Naive thymus-derived CD4-positive, alpha-beta T cell (primary cell): ENCODE measurements at regions of chrX and their contacts with region 1.

Region 1: DNA sequence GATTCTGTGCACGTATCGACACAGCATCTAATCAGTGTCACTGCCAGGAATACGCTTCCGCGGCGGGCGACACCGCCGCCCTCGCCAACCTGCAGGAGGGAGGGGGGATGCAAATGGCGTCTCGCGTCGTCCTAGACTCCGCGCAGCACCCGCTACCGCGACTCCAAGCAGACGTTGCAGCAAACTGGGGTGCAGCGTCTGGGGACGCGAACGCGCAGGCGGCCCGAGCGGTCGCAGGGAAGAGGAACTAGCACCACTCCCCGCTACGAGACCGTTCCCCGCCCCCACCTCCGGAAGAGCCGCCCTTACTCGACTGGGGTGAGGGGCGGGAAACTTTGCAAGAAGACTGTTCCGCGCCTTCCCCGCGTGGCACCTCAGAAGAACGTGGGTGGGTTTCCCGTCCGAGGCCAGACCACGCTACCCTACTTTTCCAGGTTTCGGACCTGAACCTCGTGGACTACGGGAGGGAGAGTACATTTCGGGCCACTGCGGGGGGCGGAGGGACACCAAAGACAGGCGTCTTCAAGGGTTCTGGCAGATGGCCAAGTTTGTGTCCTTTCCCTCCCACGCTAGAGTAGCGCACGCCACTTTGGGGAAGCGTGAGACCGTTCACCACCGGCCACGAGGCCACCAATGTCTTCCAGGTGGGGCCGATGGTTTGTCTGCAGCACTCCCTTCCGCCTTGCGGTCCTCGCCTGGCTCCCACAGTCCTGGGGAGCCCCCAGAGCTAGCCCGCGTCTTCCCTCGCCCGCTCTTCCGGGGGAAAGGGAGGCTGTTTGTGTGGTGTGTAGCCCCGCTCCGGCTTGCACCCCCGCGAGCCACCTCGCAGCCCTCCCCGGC is 78.0 kb upstream of the BCOR start:
- DNase-seq: peak; percentile 60 to 91 (median 83)
- ATAC-seq: peak; percentile 58
- H3K4me3 ChIP-seq: peak overlapping the region; percentile 73
- H3K4me3 Mint-ChIP-seq: peak overlapping the region; percentile 89 to 93 (median 90)
- H3K27ac ChIP-seq: peak overlapping the region; percentile 98
- H3K27ac Mint-ChIP-seq: peak overlapping the region; percentile 96 to 100 (median 98)
- H3K4me1 ChIP-seq: peaks cover 13 to 18% of the 10 kb centered on the region in 2 donors
- H3K4me1 Mint-ChIP-seq: peaks cover 5 to 46% (median 36%) of the 10 kb centered on the region in 7 donors
- H3K27me3 ChIP-seq: no peaks in the 10 kb centered on the region
- H3K27me3 Mint-ChIP-seq: no peaks in the 10 kb centered on the region

Region 2: DNA sequence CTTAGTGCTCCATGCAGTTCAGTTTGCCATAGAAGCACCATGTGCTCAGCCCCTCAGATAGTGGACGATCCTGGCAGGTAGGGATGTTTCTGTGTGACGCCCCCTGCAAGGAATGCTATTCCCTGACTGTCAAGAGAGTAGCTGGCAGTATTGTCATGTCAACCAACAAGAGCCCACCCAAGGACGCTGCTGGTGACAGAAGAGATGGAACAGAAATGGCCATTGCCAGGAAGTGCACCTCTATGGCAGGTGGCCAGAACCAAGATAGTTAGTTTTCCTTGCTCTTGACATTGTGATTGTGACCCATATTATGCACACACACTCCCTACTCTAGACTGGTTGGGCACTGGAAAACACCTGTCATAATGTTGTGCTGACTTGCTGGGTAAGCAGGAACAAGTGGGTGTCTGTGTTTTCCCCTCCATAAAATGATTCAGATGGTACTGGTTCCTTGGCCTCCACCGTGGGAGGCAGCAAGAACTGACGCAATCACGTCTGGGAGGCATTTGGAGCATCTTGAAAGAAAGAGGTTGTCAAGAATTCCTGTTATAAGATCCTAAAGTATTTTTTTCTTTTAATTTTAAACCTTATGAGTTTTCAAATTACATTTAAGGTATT is 866.6 kb before region 1 on chrX:
- CTCF ChIA-PET with region 1: no interaction called
- POLR2A ChIA-PET with region 1: no interaction called
- intact Hi-C with region 1: loop called in 1 of 2 experiments (anchors 5 kb)
- DNase-seq: peak in 7 of 9 donors; percentile 23 to 81 (median 43)
- ATAC-seq: peak; percentile 83
- H3K4me3 ChIP-seq: peak overlapping the region; percentile 41
- H3K4me3 Mint-ChIP-seq: peak overlapping the region; percentile 33 to 91 (median 76)
- H3K27ac ChIP-seq: peak overlapping the region; percentile 84
- H3K27ac Mint-ChIP-seq: peak overlapping the region; percentile 95 to 100 (median 99)
- H3K4me1 ChIP-seq: peaks cover 18 to 42% of the 10 kb centered on the region in 2 donors
- H3K4me1 Mint-ChIP-seq: peaks cover 28 to 81% (median 74%) of the 10 kb centered on the region in 7 donors
- H3K27me3 ChIP-seq: no peaks in the 10 kb centered on the region
- H3K27me3 Mint-ChIP-seq: no peaks in the 10 kb centered on the region

Region 3: DNA sequence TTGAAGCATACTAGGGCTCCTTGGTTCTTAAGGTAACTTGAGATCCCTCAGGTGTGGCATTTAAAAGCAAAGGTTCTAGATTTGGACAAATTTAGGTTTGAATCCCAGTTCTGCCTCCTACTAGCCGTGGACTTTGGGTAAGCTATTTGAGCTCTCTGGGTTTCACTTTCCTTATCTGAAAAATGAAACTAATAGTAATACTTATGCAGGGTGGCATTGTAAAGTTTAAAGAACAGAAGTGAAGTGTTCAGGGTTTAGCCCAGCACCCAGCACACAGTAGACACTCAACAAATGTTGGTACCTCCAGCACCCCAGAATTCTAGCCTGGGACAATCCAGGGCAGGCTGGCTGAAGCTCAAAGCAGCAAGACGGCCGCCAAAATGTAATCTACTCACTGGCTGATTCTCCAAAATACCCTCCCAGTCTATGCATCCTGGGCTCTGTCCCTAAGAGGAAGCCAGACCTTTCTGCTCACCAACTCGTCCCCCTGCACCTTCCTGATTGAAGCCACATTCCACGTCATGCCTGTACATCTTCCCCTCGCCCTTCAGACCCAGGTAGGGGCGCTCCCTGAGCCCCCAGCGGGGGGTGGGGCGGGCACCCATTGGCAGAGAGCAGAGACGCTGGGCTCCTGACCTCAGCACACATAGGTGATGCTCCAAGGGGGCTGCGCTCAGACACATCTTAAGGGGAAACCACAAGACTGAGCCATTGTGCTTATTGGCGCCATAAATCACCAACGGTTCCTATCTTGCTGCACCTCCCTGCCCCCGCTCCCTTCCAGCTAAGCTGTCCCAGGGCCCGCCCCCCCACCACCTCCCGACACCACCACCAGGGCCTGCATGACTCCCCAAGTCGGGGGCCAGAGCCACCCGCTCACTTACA is 238.6 kb before region 1 on chrX:
- CTCF ChIA-PET with region 1: no interaction called
- POLR2A ChIA-PET with region 1: no interaction called
- intact Hi-C with region 1: no loop called
- DNase-seq: peak in 3 of 9 donors; percentile 2 to 14 (median 8)
- ATAC-seq: peak; percentile 58
- H3K4me3 ChIP-seq: peak overlapping the region; percentile 50
- H3K4me3 Mint-ChIP-seq: peak overlapping the region; percentile 74 to 84 (median 77)
- H3K27ac ChIP-seq: peak overlapping the region; percentile 55
- H3K27ac Mint-ChIP-seq: peak overlapping the region; percentile 22 to 89 (median 81)
- H3K4me1 ChIP-seq: peaks cover 0 to 6% of the 10 kb centered on the region in 2 donors
- H3K4me1 Mint-ChIP-seq: peaks cover 0 to 16% (median 10%) of the 10 kb centered on the region in 7 donors
- H3K27me3 ChIP-seq: no peaks in the 10 kb centered on the region
- H3K27me3 Mint-ChIP-seq: no peaks in the 10 kb centered on the region

Region 4: DNA sequence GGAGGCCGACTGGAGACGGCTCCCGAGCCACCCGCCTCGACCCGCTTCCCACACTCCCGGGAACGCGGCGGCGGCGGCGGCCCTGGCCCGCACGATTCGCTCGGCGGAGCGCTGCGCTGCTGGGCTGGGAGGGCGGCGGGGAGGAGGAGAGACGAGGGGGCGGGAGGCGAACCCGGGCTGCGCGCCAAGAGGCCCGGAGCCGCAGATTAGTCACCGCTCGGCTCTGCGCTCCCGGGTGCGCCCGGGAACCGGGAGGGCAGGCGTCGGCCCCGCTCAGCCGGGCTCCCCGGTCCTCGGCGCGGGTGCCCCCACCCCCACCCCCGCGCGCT is 66.8 kb before region 1 on chrX:
- CTCF ChIA-PET with region 1: no interaction called
- POLR2A ChIA-PET with region 1: interaction called, 32 read pairs
- intact Hi-C with region 1: no loop called
- DNase-seq: peak in 5 of 9 donors; percentile 44 to 64 (median 51)
- ATAC-seq: peak; percentile 59
- H3K4me3 ChIP-seq: peak overlapping the region; percentile 43
- H3K4me3 Mint-ChIP-seq: peak overlapping the region in 9 of 10 donors; percentile 54 to 87 (median 73)
- H3K27ac ChIP-seq: peak overlapping the region; percentile 23
- H3K27ac Mint-ChIP-seq: no peak overlapping the region
- H3K4me1 ChIP-seq: no peaks in the 10 kb centered on the region
- H3K4me1 Mint-ChIP-seq: peaks cover 0 to 28% (median 13%) of the 10 kb centered on the region in 7 donors
- H3K27me3 ChIP-seq: no peaks in the 10 kb centered on the region
- H3K27me3 Mint-ChIP-seq: peaks cover 0 to 7% (median 0%) of the 10 kb centered on the region in 5 donors

Region 5: GRCh38 chrX:40201329-40201885 is 25.7 kb after region 1 on chrX:
- CTCF ChIA-PET with region 1: no interaction called
- POLR2A ChIA-PET with region 1: interaction called, 8 read pairs
- intact Hi-C with region 1: loop called (anchors 1 to 5 kb)
- DNase-seq: peak in 2 of 9 donors; percentile 13 to 15
- ATAC-seq: peak; percentile 80
- H3K4me3 ChIP-seq: no peak overlapping the region
- H3K4me3 Mint-ChIP-seq: peak overlapping the region in 1 of 10 donors; percentile 67
- H3K27ac ChIP-seq: no peak overlapping the region
- H3K27ac Mint-ChIP-seq: peak overlapping the region in 2 of 9 donors; percentile 25 to 90
- H3K4me1 ChIP-seq: peaks cover 2 to 5% of the 10 kb centered on the region in 2 donors
- H3K4me1 Mint-ChIP-seq: peaks cover 0 to 22% (median 13%) of the 10 kb centered on the region in 7 donors
- H3K27me3 ChIP-seq: no peaks in the 10 kb centered on the region
- H3K27me3 Mint-ChIP-seq: no peaks in the 10 kb centered on the region

Region 6: GRCh38 chrX:40213092-40213491 is 37.4 kb after region 1 on chrX:
- CTCF ChIA-PET with region 1: no interaction called
- POLR2A ChIA-PET with region 1: interaction called, 14 read pairs
- intact Hi-C with region 1: loop called (anchors 2 to 5 kb)
- DNase-seq: no peak
- ATAC-seq: no peak
- H3K4me3 ChIP-seq: no peak overlapping the region
- H3K4me3 Mint-ChIP-seq: no peak overlapping the region
- H3K27ac ChIP-seq: no peak overlapping the region
- H3K27ac Mint-ChIP-seq: no peak overlapping the region
- H3K4me1 ChIP-seq: no peaks in the 10 kb centered on the region
- H3K4me1 Mint-ChIP-seq: peaks cover 0 to 5% (median 0%) of the 10 kb centered on the region in 7 donors
- H3K27me3 ChIP-seq: no peaks in the 10 kb centered on the region
- H3K27me3 Mint-ChIP-seq: no peaks in the 10 kb centered on the region

Region 7: DNA sequence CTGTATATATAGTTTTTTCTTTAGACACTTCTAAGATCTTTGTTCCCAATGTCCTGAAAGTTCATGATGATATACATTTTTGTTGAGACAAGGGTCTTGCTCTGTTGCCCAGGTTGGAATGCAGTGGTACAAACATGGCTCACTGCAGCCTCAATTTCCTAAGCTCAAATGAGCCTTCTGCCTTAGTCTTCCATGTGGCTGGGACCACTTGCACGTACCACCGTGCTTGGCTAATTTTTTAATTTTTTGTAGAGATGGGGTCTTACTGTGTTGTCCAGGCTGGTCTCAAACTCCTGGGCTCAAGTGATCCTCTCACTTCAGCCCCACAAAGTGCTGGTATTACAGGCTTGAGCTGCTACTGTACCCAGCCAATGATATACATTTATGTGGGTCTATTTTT is 54.9 kb after region 1 on chrX:
- CTCF ChIA-PET with region 1: no interaction called
- POLR2A ChIA-PET with region 1: no interaction called
- intact Hi-C with region 1: no loop called
- DNase-seq: no peak
- ATAC-seq: no peak
- H3K4me3 ChIP-seq: no peak overlapping the region
- H3K4me3 Mint-ChIP-seq: no peak overlapping the region
- H3K27ac ChIP-seq: no peak overlapping the region
- H3K27ac Mint-ChIP-seq: no peak overlapping the region
- H3K4me1 ChIP-seq: no peaks in the 10 kb centered on the region
- H3K4me1 Mint-ChIP-seq: no peaks in the 10 kb centered on the region
- H3K27me3 ChIP-seq: no peaks in the 10 kb centered on the region
- H3K27me3 Mint-ChIP-seq: no peaks in the 10 kb centered on the region

Region 8: GRCh38 chrX:40266490-40267333 is 91.0 kb after region 1 on chrX:
- CTCF ChIA-PET with region 1: interaction called, 10 read pairs
- POLR2A ChIA-PET with region 1: interaction called, 6 read pairs
- intact Hi-C with region 1: loop called (anchors 2 kb)
- DNase-seq: peak; percentile 10 to 48 (median 35)
- ATAC-seq: peak; percentile 84
- H3K4me3 ChIP-seq: peak overlapping the region; percentile 61
- H3K4me3 Mint-ChIP-seq: peak overlapping the region; percentile 66 to 87 (median 80)
- H3K27ac ChIP-seq: peak overlapping the region; percentile 8
- H3K27ac Mint-ChIP-seq: peak overlapping the region in 1 of 9 donors; percentile 47
- H3K4me1 ChIP-seq: no peaks in the 10 kb centered on the region
- H3K4me1 Mint-ChIP-seq: peaks cover 0 to 13% (median 6%) of the 10 kb centered on the region in 7 donors
- H3K27me3 ChIP-seq: no peaks in the 10 kb centered on the region
- H3K27me3 Mint-ChIP-seq: no peaks in the 10 kb centered on the region

Region 9: GRCh38 chrX:40439625-40440532 is 264.1 kb after region 1 on chrX:
- CTCF ChIA-PET with region 1: no interaction called
- POLR2A ChIA-PET with region 1: no interaction called
- intact Hi-C with region 1: no loop called
- DNase-seq: no peak
- ATAC-seq: peak; percentile 56
- H3K4me3 ChIP-seq: no peak overlapping the region
- H3K4me3 Mint-ChIP-seq: no peak overlapping the region
- H3K27ac ChIP-seq: no peak overlapping the region
- H3K27ac Mint-ChIP-seq: no peak overlapping the region
- H3K4me1 ChIP-seq: no peaks in the 10 kb centered on the region
- H3K4me1 Mint-ChIP-seq: peaks cover 0 to 7% (median 0%) of the 10 kb centered on the region in 7 donors
- H3K27me3 ChIP-seq: no peaks in the 10 kb centered on the region
- H3K27me3 Mint-ChIP-seq: peaks cover 0 to 14% (median 0%) of the 10 kb centered on the region in 5 donors